Adrenal gland (tissue), 19 donors: ENCODE measurements at regions of chr4 and their contacts with region 1.

Region 1: GRCh38 chr4:101347557-101348366 is 436 bp upstream of the PPP3CA start:
- DNase-seq: peak; percentile 99 to 100 (median 99)
- H3K4me3 ChIP-seq: peak overlapping the region; percentile 58 to 92 (median 90)
- H3K27ac ChIP-seq: peak overlapping the region; percentile 91 to 98 (median 97)
- H3K4me1 ChIP-seq: peaks cover 5 to 28% of the 10 kb centered on the region in 2 donors
- H3K27me3 ChIP-seq: no peaks in the 10 kb centered on the region
- CTCF ChIP-seq: peak in 4 of 6 experiments; percentile 30 to 34 (median 32)
- POLR2A ChIP-seq: peak; percentile 75 to 89

Region 2: DNA sequence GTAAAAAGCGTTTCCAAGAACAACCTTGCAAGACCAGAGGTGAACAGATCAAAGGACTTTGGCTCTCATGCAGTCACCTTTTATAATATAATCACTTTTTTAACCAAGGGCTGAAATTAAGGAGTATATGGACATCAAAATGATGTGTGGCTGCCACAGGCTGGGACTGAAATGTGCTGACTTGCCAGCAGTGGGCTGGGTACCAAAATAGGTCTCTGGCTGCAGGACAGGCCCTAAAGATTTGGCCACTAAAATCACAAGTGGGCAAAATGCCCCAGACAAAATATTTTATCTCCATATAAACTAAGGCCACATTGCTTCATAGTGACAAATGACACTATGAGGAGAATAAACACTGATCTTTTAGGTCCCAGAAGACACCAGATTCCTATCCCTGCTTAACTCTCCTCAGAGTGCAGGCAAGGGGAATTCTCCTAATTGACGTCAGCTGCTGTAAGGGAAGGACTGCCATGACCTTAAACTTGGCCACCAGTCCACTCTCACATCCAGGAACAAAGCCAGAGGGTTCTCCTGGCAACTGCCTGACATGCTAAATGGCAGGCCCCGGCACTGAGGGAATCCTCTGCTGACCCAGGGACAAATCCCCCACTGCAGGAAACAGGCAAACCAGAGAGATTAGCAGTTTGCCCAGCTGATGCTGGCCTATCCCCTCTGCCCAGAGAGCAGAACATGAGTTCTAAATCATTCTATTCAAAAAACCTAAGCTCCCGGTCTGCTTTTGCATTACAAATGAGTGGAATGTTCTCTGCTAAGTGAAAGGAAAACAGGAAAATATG is 156.3 kb before region 1 on chr4:
- intact Hi-C with region 1: loop called (anchors 5 to 10 kb)
- DNase-seq: peak; percentile 87 to 97 (median 94)
- H3K4me3 ChIP-seq: peak overlapping the region in 1 of 4 donors; percentile 3
- H3K27ac ChIP-seq: peak overlapping the region; percentile 55 to 85 (median 75)
- H3K4me1 ChIP-seq: peaks cover 14 to 21% of the 10 kb centered on the region in 2 donors
- H3K27me3 ChIP-seq: no peaks in the 10 kb centered on the region
- CTCF ChIP-seq: peak in 2 of 6 experiments; percentile 13 to 18
- POLR2A ChIP-seq: no peak

Region 3: DNA sequence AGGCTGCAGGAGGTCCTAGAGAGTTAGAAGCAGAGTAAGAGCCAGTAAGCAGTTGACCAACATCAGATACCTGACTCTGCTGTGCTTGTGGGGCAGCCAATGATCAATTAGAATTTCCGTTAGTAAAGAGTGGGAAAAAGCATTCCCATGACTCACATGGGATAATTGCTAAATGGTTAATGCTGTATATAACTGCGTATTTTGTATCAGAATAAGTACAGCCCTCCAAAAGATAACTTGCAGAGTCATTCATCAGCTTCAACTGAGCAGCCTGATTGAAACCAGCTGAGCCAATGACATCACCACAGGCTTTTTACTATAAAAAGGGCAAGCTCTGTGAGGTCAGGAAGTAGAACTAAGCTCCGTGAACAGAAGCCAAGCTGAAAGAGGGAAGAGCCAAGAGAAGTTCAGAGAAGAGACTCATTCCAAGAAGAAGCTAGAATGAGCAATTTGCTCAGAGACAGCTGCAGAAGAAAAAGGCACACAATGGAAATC is 68.3 kb before region 1 on chr4:
- intact Hi-C with region 1: loop called in 1 of 2 experiments (anchors 10 kb)
- DNase-seq: peak; percentile 63 to 86 (median 76)
- H3K4me3 ChIP-seq: no peak overlapping the region
- H3K27ac ChIP-seq: peak overlapping the region; percentile 19 to 82 (median 67)
- H3K4me1 ChIP-seq: peaks cover 38 to 61% of the 10 kb centered on the region in 2 donors
- H3K27me3 ChIP-seq: no peaks in the 10 kb centered on the region
- CTCF ChIP-seq: no peak
- POLR2A ChIP-seq: peak in 1 of 2 donors; percentile 79